T-cell (primary cell): ENCODE measurements at regions of chr9 and their contacts with region 1.

Region 1: DNA sequence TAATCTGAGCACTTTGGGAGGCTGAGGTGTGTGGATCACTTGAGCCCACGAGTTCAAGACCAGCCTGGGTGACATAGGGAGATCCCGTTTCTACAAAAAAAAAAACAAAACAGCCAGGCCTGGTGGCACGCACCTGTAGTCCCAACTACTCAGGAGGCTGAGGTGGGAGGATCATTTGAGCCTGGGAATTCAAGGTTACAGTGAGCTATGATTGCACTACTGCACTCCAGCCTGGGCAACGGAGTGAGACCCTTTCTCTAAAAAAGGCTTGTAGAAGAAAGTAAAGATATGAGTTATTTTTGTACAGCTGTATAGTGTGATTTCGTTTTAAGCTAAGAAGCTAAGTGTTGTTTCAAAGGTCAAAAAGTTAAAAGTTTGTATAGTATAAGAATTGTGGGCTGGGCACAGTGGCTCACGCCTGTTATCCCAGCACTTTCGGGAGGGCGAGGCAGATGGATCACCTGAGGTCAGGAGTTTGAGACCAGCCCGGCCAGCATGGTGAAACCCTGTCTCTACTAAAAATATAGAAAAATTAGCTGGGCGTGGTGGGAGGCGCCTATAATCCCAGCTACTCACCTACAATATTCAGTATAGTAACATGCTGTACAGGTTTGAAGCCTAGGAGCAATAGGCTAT is 18.8 kb downstream of the UBE2R2 start:
- DNase-seq: no peak
- ATAC-seq: no peak
- H3K4me3 ChIP-seq: no peak overlapping the region
- H3K4me3 Mint-ChIP-seq: no peak overlapping the region
- H3K27ac ChIP-seq: no peak overlapping the region
- H3K27ac Mint-ChIP-seq: no peak overlapping the region
- H3K4me1 ChIP-seq: peaks cover 3 to 4% of the 10 kb centered on the region in 2 experiments
- H3K4me1 Mint-ChIP-seq: peaks cover 52 to 55% (median 53%) of the 10 kb centered on the region in 3 donors
- H3K27me3 ChIP-seq: no peaks in the 10 kb centered on the region
- H3K27me3 Mint-ChIP-seq: no peaks in the 10 kb centered on the region

Region 2: DNA sequence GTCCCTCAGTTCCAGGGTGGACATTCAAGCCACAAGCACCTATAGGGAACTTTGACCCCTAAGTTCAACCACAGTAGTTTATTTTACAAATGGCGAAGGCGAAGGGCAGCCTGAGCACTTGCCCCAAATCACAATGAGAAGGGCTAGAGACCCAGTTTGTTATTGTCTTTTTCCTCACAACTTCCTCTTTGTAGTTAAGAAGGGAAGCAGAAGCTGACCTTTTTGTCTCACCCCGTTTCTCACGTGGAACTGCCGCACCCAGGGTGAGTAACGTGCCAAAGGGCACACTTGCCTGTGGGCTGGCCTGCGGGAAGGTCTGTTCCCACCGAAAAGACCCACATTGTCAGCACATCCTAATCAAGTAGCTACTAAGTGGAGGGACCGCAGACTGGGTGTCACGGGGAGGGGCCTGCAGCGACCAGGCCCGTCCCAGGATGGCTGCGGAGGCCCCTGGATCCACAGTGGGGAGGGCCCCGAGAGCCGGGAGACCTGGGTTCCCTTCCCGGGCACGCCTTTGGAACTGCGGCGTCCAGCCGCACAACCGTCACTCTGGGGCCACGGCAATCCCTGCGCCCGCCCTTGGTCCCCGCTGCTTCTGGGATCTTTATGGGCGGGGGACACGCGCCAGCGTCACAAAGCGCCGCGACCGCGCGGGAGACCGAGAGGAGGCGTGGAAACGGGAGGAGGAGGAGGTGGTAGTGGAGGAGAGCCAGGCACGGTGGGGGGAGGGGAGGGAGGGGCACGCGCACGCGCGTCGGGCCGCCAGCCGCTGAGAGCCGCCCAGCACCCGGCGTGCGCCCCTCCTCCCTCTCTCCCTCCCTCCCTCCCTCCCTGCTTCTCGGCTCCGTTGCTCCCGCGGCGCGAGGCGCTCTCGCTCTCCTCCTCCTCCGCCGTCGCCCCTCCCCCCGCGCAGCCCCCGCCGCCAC is 19.2 kb before region 1 on chr9 and contains the start of gene UBE2R2:
- CTCF ChIA-PET with region 1: interaction called, 9 to 10 read pairs
- POLR2A ChIA-PET with region 1: interaction called in 1 of 2 experiments, 5 read pairs
- DNase-seq: peak; percentile 81 to 98 (median 92)
- ATAC-seq: peak; percentile 82 to 86 (median 84)
- H3K4me3 ChIP-seq: peak within 1 kb of the TSS; percentile 94 to 99
- H3K4me3 Mint-ChIP-seq: peak within 1 kb of the TSS; percentile 84 to 97 (median 88)
- H3K27ac ChIP-seq: peak within 1 kb of the TSS; percentile 95
- H3K27ac Mint-ChIP-seq: peak within 1 kb of the TSS; percentile 94 to 97
- H3K4me1 ChIP-seq: peaks cover 11 to 20% of the 10 kb centered on the region in 2 experiments
- H3K4me1 Mint-ChIP-seq: peaks cover 46 to 57% (median 57%) of the 10 kb centered on the region in 3 donors
- H3K27me3 ChIP-seq: no peaks in the 10 kb centered on the region
- H3K27me3 Mint-ChIP-seq: no peaks in the 10 kb centered on the region
- total RNA-seq, gene UBE2R2: 23.8 to 29.3 (median 28.1) TPM

Region 3: GRCh38 chr9:33852216-33852826 is 16.6 kb after region 1 on chr9:
- CTCF ChIA-PET with region 1: interaction called, 3 read pairs
- POLR2A ChIA-PET with region 1: interaction called, 3 to 10 read pairs
- DNase-seq: peak; percentile 16 to 76 (median 47)
- ATAC-seq: peak; percentile 54 to 79 (median 64)
- H3K4me3 ChIP-seq: no peak overlapping the region
- H3K4me3 Mint-ChIP-seq: no peak overlapping the region
- H3K27ac ChIP-seq: no peak overlapping the region
- H3K27ac Mint-ChIP-seq: no peak overlapping the region
- H3K4me1 ChIP-seq: peaks cover 7 to 8% of the 10 kb centered on the region in 2 experiments
- H3K4me1 Mint-ChIP-seq: peaks cover 46 to 52% (median 46%) of the 10 kb centered on the region in 3 donors
- H3K27me3 ChIP-seq: no peaks in the 10 kb centered on the region
- H3K27me3 Mint-ChIP-seq: no peaks in the 10 kb centered on the region

Region 4: GRCh38 chr9:33867747-33868439 is 32.1 kb after region 1 on chr9:
- CTCF ChIA-PET with region 1: no interaction called
- POLR2A ChIA-PET with region 1: interaction called in 1 of 2 experiments, 13 read pairs
- DNase-seq: no peak
- ATAC-seq: no peak
- H3K4me3 ChIP-seq: no peak overlapping the region
- H3K4me3 Mint-ChIP-seq: no peak overlapping the region
- H3K27ac ChIP-seq: no peak overlapping the region
- H3K27ac Mint-ChIP-seq: no peak overlapping the region
- H3K4me1 ChIP-seq: peaks cover 0 to 13% of the 10 kb centered on the region in 2 experiments
- H3K4me1 Mint-ChIP-seq: peaks cover 34 to 44% (median 43%) of the 10 kb centered on the region in 3 donors
- H3K27me3 ChIP-seq: no peaks in the 10 kb centered on the region
- H3K27me3 Mint-ChIP-seq: no peaks in the 10 kb centered on the region